Right ventricle myocardium inferior (tissue), 1 donor: ENCODE measurements at regions of chr12 and their contacts with region 1.

Region 1: DNA sequence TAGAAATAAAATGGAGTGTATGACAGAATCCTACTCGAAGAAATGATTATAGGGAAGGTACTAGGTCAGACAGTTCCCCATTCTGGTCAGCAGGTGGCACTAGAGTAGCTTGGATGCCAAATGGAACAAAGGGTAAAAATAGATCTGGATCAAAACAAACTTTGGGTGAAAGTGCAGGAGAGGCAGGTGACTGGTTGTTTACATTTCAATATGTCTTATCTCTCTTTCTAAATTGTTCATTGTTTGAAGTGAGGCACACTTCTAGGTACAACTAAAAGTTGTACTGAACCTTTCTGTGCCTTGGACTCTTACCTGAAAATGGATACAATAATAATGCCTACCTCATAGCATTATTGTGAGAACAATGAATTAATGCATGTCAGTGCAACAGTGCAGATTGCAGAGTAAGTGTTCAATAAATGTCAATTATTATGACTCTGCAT is 62.0 kb upstream of the OSBPL8 start:
- DNase-seq: peak; percentile 71
- ATAC-seq: peak; percentile 79

Region 2: DNA sequence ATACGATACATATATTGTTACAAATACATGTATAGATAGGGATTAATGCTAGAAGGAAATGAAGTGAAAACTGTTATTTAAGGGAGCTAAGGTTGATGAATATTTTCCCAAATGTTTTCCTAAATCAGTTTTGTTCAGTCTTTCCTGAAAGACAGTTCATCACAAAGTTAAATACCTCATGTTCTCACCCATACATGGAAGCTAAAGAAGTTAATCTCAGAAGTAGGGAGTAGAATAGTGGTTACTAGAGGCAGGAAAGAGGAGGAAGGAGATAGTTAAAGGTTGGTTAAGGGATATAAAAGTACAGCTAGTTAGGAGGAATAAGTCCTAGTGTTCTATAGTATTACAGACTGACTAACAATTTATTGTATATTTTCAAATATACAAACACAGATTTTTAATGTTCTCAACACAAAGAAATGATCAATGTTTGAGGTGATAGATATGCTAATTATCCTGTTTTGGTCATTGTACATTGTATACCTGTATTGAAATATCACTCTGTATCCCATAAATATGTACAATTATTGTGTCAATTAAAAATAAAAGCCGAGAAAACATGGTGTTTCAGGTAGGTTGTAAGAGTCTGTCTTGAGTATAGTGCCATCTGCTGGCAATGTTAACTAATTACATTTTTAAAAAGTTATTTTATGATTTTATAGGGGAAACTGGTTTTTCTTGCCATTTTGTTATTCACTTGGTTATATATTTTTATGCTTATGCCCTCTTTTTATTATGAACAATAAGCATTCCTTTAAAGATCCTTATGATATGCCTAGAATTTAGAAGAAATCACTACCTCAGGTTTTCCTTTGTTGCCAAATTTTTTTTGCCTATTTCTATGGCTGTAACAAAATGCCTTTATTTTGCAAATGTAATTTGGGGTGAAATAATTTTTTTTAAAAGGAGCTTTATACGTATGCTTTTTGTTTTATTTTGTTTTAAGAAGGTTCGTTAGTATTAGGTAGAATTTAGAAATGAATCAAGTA is 169.3 kb after region 1 on chr12:
- intact Hi-C with region 1: loop called (anchors 1 kb)
- DNase-seq: no peak
- ATAC-seq: peak; percentile 43

Region 3: GRCh38 chr12:76927170-76927784 is 305.7 kb after region 1 on chr12:
- intact Hi-C with region 1: loop called (anchors 5 kb)
- DNase-seq: no peak
- ATAC-seq: no peak

Region 4: DNA sequence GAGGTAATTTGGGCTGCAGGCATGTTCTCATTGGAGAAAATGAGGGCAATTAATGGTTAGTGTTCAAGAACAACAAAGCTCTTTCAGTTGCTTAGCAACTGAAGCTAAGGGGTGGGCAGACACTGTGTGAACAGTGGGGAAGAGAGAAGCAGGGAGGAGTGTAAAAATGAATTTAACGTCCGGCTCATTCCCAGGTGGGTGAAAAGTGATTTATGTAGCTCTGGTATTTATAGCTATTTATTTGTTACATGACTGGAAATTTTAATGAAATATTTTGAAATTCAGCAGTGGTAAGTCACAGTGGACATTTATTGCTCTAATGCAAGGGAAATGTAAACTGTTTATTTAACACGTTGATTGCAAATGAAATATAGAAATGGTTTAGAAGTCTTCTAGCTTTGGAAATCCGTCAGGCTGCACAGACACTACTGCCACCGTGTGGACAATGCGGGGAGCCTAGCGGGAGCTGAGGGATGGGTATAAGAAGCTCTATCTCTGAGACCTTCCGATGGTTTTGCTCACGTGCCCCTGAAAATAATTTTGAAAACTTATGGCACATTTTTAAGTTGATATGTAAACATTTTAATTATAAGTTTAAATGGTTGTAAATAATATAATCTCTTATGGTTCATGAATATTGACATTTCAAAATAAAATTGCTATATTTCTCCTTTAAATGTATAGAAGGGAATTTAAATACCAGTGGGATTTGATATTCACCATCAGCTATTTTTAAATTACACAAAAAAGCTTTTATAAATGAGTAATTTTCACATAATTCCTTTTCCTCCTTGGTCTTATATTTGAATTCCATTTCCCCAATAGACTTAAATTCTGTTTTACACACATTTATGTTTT is 389.3 kb after region 1 on chr12:
- intact Hi-C with region 1: loop called (anchors 2 kb)
- DNase-seq: peak; percentile 77
- ATAC-seq: peak; percentile 70